ENCODE measurements at regions of chr9 and their contacts with region 1.

Region 1: DNA sequence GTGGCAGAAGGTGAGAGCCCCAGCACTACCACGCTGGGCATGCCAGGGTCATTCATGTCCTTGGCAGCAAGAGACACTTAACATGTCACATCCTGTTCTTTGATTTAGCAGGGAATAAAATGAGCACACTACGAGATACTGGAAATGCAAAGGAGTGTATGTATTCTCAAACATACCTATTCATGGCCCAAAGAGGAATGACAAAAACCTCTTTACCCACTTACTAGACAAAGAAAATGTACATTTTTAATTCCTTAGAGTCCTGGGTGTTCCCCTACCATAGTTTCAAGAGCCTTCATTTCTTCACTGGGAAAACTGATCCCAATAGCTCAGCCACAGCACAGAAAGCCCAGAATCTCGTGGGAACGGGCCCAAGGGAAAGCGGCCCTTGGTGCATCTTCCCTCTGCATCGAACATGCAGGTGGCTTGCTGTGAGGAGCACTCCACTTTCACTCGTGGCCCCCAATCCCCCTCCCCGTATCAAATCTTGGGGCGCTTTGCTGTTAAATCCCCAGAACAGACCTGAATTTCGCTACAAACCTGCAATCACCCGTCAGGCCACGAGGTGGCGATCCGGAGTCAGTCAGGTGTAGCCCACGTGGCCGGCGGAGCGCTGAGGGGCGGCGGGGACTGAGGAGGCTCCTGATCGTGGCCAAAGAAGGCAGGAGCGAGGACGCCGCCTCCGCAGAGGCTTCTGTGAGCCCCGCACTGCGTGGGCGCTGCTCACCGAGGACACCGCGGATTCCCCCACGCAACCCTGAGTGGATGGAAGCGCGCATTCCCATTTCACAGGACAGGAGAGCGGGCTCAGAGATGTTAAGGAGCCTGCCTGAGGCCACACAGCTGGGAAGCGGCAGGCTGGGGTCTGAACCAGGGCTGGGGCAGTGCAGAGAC is 91.4 kb downstream of the LMX1B start:
- DNase-seq: peak; percentile 93
- ATAC-seq: peak; percentile 85
- H3K4me3 Mint-ChIP-seq: no peak overlapping the region
- H3K27ac Mint-ChIP-seq: no peak overlapping the region
- H3K4me1 Mint-ChIP-seq: peaks cover 14% of the 10 kb centered on the region
- H3K27me3 Mint-ChIP-seq: peaks cover 17% of the 10 kb centered on the region
- CTCF ChIP-seq: peak; percentile 88

Region 2: GRCh38 chr9:126240835-126241234 is 464.3 kb before region 1 on chr9:
- CTCF ChIA-PET with region 1: no interaction called
- POLR2A ChIA-PET with region 1: no interaction called
- intact Hi-C with region 1: no loop called
- DNase-seq: no peak
- ATAC-seq: no peak
- H3K4me3 Mint-ChIP-seq: no peak overlapping the region
- H3K27ac Mint-ChIP-seq: no peak overlapping the region
- H3K4me1 Mint-ChIP-seq: no peaks in the 10 kb centered on the region
- H3K27me3 Mint-ChIP-seq: peaks cover 7% of the 10 kb centered on the region
- CTCF ChIP-seq: no peak

Region 3: DNA sequence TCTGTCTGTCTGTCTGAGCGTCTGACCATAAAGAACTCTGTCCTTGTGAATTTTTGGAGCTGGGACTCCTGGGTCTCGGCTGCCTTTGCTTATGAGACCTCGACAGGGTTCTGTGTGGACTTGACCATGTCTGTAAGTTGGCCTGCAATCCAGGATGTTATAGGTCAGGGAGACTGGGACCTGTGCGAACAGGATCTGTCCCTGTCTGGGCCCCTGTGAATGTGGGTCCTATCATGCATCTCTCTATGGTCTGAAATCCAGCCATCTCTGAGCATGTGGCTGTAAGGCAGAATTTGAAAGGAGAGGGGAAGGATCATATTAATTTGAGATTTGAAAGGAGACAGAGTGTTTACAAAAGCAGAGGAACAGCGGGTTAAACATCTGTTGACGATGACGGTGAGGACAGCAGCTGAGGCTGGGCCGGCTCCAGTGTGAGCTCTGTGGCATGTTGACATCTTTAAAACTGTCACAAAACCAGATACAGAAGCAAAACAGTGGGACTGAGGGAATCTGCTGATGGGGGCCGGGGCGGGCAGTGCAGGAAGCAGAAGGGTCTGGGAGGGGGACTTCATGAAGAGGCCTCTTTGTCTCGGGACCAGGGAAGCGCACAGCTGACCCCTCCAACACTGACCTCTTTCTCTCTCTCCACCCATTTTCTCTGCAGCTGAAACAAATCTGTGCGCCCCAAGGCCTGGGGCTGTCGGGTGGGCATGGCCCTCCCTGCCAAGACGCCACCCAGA is 397.6 kb before region 1 on chr9:
- CTCF ChIA-PET with region 1: no interaction called
- POLR2A ChIA-PET with region 1: no interaction called
- intact Hi-C with region 1: no loop called
- DNase-seq: no peak
- ATAC-seq: no peak
- H3K4me3 Mint-ChIP-seq: no peak overlapping the region
- H3K27ac Mint-ChIP-seq: no peak overlapping the region
- H3K4me1 Mint-ChIP-seq: no peaks in the 10 kb centered on the region
- H3K27me3 Mint-ChIP-seq: no peaks in the 10 kb centered on the region
- CTCF ChIP-seq: no peak

Region 4: GRCh38 chr9:126690431-126691350 is 14.4 kb before region 1 on chr9:
- CTCF ChIA-PET with region 1: interaction called, 19 read pairs
- POLR2A ChIA-PET with region 1: interaction called, 4 read pairs
- intact Hi-C with region 1: no loop called
- DNase-seq: peak; percentile 75
- ATAC-seq: peak; percentile 92
- H3K4me3 Mint-ChIP-seq: no peak overlapping the region
- H3K27ac Mint-ChIP-seq: no peak overlapping the region
- H3K4me1 Mint-ChIP-seq: no peaks in the 10 kb centered on the region
- H3K27me3 Mint-ChIP-seq: peaks cover 21% of the 10 kb centered on the region
- CTCF ChIP-seq: peak; percentile 70

Region 5: DNA sequence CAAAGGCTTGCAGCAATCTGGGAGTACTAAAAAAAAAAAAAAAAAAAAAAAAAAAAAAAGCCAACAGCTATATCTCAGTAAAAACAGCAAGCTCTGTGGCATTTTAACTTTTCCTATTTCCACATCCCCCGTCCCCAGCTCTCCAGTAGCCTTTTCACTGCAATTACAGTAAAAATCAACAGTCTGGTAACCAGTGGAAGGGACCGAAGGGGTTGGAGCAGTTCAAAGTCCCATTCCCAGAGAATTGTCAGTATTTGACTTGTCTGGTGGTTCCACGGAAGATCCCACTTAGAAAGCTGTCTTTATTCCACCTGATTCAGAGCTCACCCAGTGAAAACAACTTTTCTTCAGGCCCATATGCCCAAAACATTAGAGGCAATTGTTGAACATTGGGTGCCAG is 27.9 kb after region 1 on chr9:
- CTCF ChIA-PET with region 1: interaction called, 52 read pairs
- POLR2A ChIA-PET with region 1: interaction called, 3 read pairs
- intact Hi-C with region 1: no loop called
- DNase-seq: no peak
- ATAC-seq: no peak
- H3K4me3 Mint-ChIP-seq: no peak overlapping the region
- H3K27ac Mint-ChIP-seq: no peak overlapping the region
- H3K4me1 Mint-ChIP-seq: no peaks in the 10 kb centered on the region
- H3K27me3 Mint-ChIP-seq: no peaks in the 10 kb centered on the region
- CTCF ChIP-seq: no peak

Region 6: GRCh38 chr9:126756876-126757415 is 51.8 kb after region 1 on chr9:
- CTCF ChIA-PET with region 1: interaction called, 67 read pairs
- POLR2A ChIA-PET with region 1: no interaction called
- intact Hi-C with region 1: no loop called
- DNase-seq: no peak
- ATAC-seq: no peak
- H3K4me3 Mint-ChIP-seq: no peak overlapping the region
- H3K27ac Mint-ChIP-seq: no peak overlapping the region
- H3K4me1 Mint-ChIP-seq: no peaks in the 10 kb centered on the region
- H3K27me3 Mint-ChIP-seq: no peaks in the 10 kb centered on the region
- CTCF ChIP-seq: no peak

Region 7: DNA sequence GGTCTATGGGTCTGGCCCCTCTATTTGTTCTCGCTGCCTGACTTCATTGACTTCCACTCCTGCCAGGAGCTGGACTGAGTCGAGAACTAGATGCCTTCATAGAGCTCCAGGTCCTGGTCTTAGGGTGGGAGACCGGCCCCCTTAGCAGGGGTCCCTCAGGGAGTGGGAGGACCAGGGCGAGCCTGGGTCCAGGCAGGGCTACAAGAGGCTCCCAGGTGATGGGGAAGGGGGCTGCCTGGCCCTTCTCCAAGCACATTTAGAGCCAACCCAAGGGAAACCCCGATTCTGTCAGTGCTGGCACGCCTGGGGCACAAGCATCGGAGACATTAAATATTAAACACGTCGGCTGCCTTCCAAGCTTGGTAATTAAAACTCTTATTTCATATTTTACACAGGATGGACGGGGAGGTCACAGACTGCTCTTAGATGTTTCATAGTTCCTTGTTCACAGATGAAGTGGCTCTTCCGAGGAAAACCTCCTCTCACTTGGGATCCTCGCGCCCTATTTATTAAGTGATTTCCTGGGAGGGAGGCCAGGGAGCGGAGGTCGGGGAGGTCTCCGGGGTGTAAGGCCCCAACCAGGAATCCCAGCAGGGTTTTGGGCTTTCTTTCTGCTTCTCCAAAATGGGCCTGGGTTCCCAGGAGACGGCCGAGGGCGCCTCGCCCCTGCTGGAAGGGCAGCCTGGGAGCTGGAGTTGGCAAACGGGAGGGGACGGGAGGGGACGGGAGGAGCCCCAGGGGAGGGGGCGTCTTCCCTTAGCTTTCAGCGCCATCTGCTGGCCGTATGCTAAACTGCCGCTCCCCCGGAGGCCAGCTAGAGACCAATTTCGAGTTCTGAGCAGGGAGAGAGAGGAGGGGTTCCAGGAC is 76.3 kb after region 1 on chr9:
- CTCF ChIA-PET with region 1: interaction called, 456 read pairs
- POLR2A ChIA-PET with region 1: interaction called, 5 read pairs
- intact Hi-C with region 1: loop called (anchors 1 kb)
- DNase-seq: peak; percentile 88
- ATAC-seq: peak; percentile 96
- H3K4me3 Mint-ChIP-seq: no peak overlapping the region
- H3K27ac Mint-ChIP-seq: no peak overlapping the region
- H3K4me1 Mint-ChIP-seq: no peaks in the 10 kb centered on the region
- H3K27me3 Mint-ChIP-seq: peaks cover 14% of the 10 kb centered on the region
- CTCF ChIP-seq: peak; percentile 97

Region 8: DNA sequence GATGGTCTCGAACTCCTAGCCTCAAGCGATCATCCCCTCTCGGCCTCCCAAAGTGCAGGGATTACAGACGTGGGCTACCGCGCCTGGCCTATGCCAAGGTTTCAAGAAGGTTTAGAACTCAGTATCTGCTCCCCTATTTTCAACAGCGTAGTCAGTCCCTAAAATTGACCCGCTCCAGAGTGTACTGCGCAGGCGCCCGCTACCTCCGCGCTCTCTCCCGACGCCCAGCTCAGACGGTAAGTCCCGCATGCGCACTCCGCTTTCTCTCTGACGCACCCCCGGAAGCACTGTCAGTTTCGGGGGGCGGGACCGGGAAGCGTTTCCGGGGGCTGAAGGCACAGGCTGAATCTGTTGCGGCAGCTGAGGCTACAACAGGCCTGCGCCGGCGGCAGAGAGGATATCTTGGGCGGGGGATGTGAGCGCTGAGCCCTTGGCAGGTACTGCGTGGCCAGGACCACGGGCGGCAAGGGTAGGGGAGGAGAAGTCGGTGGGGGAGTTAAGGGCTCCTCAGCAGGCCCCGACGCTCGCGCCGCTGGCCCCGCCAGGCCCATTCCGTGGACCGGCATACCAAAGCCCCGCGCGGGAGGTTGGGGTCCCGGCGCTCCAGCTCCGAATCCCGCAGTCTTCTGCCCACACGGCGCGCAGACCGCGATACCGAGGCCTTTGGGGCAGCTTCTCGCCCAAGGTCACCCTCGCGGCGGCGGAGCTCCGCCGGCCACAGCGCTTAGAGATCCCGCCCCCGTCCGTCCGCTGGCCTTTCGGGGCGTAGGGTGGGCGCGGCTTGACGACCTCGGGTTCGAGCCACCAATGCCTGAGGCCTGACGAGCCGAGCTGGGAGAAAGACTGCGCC is 99.8 kb after region 1 on chr9 and contains the start of gene ZBTB43:
- CTCF ChIA-PET with region 1: interaction called, 25 read pairs
- POLR2A ChIA-PET with region 1: no interaction called
- intact Hi-C with region 1: no loop called
- DNase-seq: peak; percentile 99
- ATAC-seq: peak; percentile 83
- H3K4me3 Mint-ChIP-seq: peak within 1 kb of the TSS; percentile 84
- H3K27ac Mint-ChIP-seq: peak within 1 kb of the TSS; percentile 97
- H3K4me1 Mint-ChIP-seq: peaks cover 28% of the 10 kb centered on the region
- H3K27me3 Mint-ChIP-seq: no peaks in the 10 kb centered on the region
- CTCF ChIP-seq: no peak
- total RNA-seq, gene ZBTB43: 14.3 to 21.1 TPM

Measured in activated CD8-positive, alpha-beta T cell treated with anti-CD3 and anti-CD28 coated beads for 36 hours (primary cell).